ENCODE measurements at regions of chrX and their contacts with region 1.

Region 1: GRCh38 chrX:107537815-107538214 is 88.4 kb downstream of the FRMPD3 start:
- DNase-seq: peak; percentile 27
- H3K4me3 ChIP-seq: no peak overlapping the region
- H3K27ac ChIP-seq: no peak overlapping the region
- H3K4me1 ChIP-seq: no peaks in the 10 kb centered on the region
- H3K27me3 ChIP-seq: peaks cover 2% of the 10 kb centered on the region
- CTCF ChIP-seq: peak; percentile 61 to 68

Region 2: DNA sequence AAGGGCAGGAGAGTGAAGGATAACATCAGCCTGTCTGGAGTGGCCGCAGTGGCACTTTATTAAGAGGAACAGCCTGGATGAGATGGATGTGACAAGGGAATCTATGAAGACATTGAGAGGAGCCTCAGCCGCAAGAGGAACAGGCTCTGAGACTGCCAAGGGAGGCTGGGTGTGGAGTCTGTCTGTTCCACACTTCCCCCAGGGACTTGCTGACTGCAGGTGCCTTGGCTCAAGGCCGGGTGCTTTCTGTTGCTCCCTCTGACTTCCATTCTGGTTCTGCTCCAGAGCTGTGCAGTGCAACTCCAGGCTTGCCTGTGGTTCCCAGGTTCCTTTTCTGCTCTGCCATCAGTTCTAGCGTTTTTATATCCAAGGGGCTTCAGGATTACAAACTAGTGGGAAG is 33.8 kb before region 1 on chrX:
- CTCF ChIA-PET with region 1: no interaction called
- dilution Hi-C with region 1: loop called (anchors 5 kb)
- in situ Hi-C with region 1: no loop called
- intact Hi-C with region 1: no loop called
- DNase-seq: no peak
- H3K4me3 ChIP-seq: no peak overlapping the region
- H3K27ac ChIP-seq: no peak overlapping the region
- H3K4me1 ChIP-seq: peaks cover 2% of the 10 kb centered on the region
- H3K27me3 ChIP-seq: peaks cover 14% of the 10 kb centered on the region
- CTCF ChIP-seq: no peak

Region 3: GRCh38 chrX:107654872-107655761 is 117.3 kb after region 1 on chrX:
- CTCF ChIA-PET with region 1: no interaction called
- dilution Hi-C with region 1: no loop called
- in situ Hi-C with region 1: no loop called
- intact Hi-C with region 1: loop called (anchors 5 kb)
- DNase-seq: peak; percentile 91
- H3K4me3 ChIP-seq: no peak overlapping the region
- H3K27ac ChIP-seq: no peak overlapping the region
- H3K4me1 ChIP-seq: peaks cover 6% of the 10 kb centered on the region
- H3K27me3 ChIP-seq: no peaks in the 10 kb centered on the region
- CTCF ChIP-seq: peak; percentile 48 to 62

Region 4: DNA sequence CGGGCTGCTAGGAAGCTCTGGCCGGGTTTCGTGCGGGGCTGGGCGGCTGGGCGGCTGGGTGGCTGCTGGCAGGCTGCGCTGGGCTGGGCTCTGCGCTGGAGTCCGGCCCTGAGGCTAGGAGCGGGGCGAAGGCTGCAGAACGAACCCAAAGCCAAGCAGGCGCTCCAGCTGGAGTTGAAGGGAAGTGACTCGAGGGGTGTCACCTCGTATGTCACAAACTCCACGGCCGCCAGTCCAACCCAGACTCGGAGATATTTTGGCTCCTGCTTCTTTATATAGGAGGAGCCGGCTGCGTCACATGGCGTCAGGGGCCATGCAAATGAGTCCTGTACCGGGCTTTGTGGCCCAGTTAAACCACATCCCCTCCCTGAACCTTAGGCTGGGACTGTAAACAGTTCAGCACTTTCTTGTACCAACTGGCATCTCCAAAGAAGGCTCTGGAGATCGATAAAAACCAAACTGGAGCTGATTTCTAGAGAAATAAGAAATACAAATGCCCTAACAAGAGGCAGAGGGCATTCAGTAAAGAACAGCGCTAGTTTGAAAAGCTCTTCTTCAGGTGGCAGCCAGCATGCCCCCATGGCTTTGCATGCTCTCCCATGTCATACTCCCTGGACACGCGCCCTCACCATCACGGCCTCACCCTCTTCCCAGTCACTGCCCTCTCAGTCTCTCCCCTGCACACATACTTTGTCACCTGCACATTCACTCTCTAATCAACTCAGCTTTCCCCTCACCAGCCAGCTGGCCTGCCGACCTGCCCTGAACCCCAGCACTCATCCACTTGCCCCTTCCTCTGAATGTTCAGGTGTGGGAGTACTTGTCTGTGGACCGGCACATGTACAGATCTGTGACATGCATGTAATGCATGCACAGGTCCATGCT is 179.2 kb after region 1 on chrX:
- CTCF ChIA-PET with region 1: no interaction called
- dilution Hi-C with region 1: no loop called
- in situ Hi-C with region 1: no loop called
- intact Hi-C with region 1: loop called (anchors 1 kb)
- DNase-seq: peak; percentile 77
- H3K4me3 ChIP-seq: peak overlapping the region; percentile 47 to 68 (median 65)
- H3K27ac ChIP-seq: peak overlapping the region; percentile 85
- H3K4me1 ChIP-seq: peaks cover 13% of the 10 kb centered on the region
- H3K27me3 ChIP-seq: no peaks in the 10 kb centered on the region
- CTCF ChIP-seq: no peak

Region 5: GRCh38 chrX:107787827-107788226 is 250.0 kb after region 1 on chrX:
- CTCF ChIA-PET with region 1: no interaction called
- dilution Hi-C with region 1: no loop called
- in situ Hi-C with region 1: loop called (anchors 10 to 25 kb)
- intact Hi-C with region 1: no loop called
- DNase-seq: no peak
- H3K4me3 ChIP-seq: no peak overlapping the region
- H3K27ac ChIP-seq: no peak overlapping the region
- H3K4me1 ChIP-seq: no peaks in the 10 kb centered on the region
- H3K27me3 ChIP-seq: peaks cover 3% of the 10 kb centered on the region
- CTCF ChIP-seq: no peak

Region 6: DNA sequence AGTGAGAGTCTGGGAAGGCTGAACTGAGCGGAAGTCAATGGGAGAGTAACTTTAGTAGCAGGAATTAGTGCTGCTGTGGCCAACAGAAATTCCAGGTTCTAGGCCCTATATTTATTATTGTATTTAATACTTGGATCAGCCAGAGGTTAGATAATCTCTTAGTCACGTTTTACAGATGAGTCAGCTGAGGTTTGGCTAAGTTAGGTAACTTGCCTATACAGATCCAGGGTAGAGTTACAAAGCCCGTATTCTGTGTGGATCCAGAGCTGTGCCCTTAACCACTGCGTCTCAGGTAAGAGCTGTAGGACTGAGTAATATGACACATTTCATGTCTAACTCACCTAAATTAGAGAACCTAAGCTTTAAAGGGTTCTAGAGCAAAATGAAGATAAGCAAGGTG is 533.1 kb after region 1 on chrX:
- CTCF ChIA-PET with region 1: no interaction called
- dilution Hi-C with region 1: no loop called
- in situ Hi-C with region 1: no loop called
- intact Hi-C with region 1: loop called (anchors 10 kb)
- DNase-seq: peak; percentile 89
- H3K4me3 ChIP-seq: no peak overlapping the region
- H3K27ac ChIP-seq: peak overlapping the region; percentile 39
- H3K4me1 ChIP-seq: peaks cover 24% of the 10 kb centered on the region
- H3K27me3 ChIP-seq: no peaks in the 10 kb centered on the region
- CTCF ChIP-seq: no peak

Measured in mammary epithelial cell (primary cell).